AG04450 (cell line): ENCODE measurements at regions of chr6 and their contacts with region 1.

Region 1: GRCh38 chr6:150813319-150813992 is 52.0 kb upstream of the MTHFD1L start:
- DNase-seq: no peak
- H3K4me3 ChIP-seq: no peak overlapping the region
- H3K27ac ChIP-seq: no peak overlapping the region
- H3K27me3 ChIP-seq: no peaks in the 10 kb centered on the region
- CTCF ChIP-seq: no peak

Region 2: DNA sequence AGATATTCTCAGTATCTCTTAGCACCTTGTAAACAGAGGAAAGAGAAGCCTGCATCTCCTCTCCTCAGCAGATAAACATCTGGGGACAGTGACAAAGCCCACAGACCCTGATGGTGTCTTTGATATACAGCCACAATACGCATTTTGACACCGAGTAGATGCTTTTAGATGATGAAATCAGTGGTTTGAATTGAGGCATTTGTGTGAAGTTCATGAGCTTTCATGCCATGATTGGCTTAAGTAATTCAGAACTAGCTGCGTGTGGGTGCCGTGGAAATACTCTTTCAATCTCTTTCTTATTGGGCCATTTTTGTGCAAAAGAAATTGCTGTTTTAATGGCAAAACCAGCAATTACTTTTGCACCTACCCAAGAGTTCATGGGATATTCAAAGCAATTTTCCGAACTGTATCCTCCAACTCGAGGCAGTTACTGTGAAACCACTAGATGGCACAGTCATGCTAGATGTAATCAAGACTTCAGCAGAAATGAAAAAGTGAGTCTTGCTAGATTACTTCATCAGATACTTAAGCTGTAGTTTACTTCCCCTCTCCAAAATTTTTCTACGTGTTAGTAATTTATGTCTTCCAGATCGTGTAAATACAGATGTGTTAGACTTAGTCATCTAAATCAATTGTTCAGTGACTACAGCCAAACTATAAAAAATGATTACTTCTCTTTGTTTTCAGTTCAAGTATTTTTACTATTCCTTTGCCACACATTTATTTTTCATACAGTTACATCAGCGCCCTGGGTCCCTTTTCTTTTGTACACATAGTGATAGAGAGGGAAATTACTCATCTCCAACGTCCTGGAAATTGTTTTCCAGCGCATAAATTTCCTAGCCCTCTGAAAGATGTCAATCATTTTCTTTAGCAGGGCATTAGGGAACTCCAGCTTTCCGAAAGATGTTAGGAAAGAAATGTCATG is 395.3 kb before region 1 on chr6:
- CTCF ChIA-PET with region 1: interaction called, 183 read pairs
- POLR2A ChIA-PET with region 1: no interaction called
- DNase-seq: peak; percentile 10
- H3K4me3 ChIP-seq: peak overlapping the region; percentile 38; the same call in 1 of the 2 replicates
- H3K27ac ChIP-seq: no peak overlapping the region
- H3K27me3 ChIP-seq: no peaks in the 10 kb centered on the region
- CTCF ChIP-seq: peak; percentile 69

Region 3: GRCh38 chr6:150753371-150754064 is 59.9 kb before region 1 on chr6:
- CTCF ChIA-PET with region 1: no interaction called
- POLR2A ChIA-PET with region 1: no interaction called
- DNase-seq: no peak
- H3K4me3 ChIP-seq: no peak overlapping the region
- H3K27ac ChIP-seq: no peak overlapping the region
- H3K27me3 ChIP-seq: peaks cover 7% of the 10 kb centered on the region
- CTCF ChIP-seq: no peak

Region 4: GRCh38 chr6:150835620-150836019 is 22.2 kb after region 1 on chr6:
- CTCF ChIA-PET with region 1: interaction called, 20 read pairs
- POLR2A ChIA-PET with region 1: no interaction called
- DNase-seq: no peak
- H3K4me3 ChIP-seq: no peak overlapping the region
- H3K27ac ChIP-seq: no peak overlapping the region
- H3K27me3 ChIP-seq: no peaks in the 10 kb centered on the region
- CTCF ChIP-seq: no peak

Region 5: DNA sequence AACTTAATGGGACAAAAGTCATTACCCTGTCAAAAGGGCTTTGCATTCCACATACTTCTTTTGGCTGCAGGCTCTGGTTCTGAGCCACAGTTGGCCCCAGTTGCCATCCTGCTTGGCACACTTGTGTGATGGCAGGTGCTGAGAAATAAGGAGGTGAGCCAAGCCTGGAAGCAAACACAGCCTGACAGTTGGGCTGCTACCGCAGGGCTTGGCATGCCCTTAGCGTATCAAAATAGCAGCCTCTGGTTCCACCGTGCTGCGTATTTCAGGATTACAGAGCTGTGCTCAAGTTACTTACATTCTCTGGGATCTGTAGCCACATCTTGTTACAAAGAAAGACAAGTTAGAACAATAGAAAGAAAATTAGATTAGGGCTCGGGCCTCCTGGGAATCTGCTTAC is 63.1 kb after region 1 on chr6:
- CTCF ChIA-PET with region 1: interaction called, 19 read pairs
- POLR2A ChIA-PET with region 1: no interaction called
- DNase-seq: no peak
- H3K4me3 ChIP-seq: no peak overlapping the region
- H3K27ac ChIP-seq: no peak overlapping the region
- H3K27me3 ChIP-seq: no peaks in the 10 kb centered on the region
- CTCF ChIP-seq: no peak

Region 6: GRCh38 chr6:151323791-151324487 is 510.5 kb after region 1 on chr6:
- CTCF ChIA-PET with region 1: interaction called, 16 read pairs
- POLR2A ChIA-PET with region 1: no interaction called
- DNase-seq: peak; percentile 70
- H3K4me3 ChIP-seq: peak overlapping the region; percentile 14; the same call in 1 of the 2 replicates
- H3K27ac ChIP-seq: peak overlapping the region; percentile 47
- H3K27me3 ChIP-seq: no peaks in the 10 kb centered on the region
- CTCF ChIP-seq: peak; percentile 94